Sigmoid colon (tissue), 7 donors: ENCODE measurements at regions of chr2 and their contacts with region 1.

Region 1: DNA sequence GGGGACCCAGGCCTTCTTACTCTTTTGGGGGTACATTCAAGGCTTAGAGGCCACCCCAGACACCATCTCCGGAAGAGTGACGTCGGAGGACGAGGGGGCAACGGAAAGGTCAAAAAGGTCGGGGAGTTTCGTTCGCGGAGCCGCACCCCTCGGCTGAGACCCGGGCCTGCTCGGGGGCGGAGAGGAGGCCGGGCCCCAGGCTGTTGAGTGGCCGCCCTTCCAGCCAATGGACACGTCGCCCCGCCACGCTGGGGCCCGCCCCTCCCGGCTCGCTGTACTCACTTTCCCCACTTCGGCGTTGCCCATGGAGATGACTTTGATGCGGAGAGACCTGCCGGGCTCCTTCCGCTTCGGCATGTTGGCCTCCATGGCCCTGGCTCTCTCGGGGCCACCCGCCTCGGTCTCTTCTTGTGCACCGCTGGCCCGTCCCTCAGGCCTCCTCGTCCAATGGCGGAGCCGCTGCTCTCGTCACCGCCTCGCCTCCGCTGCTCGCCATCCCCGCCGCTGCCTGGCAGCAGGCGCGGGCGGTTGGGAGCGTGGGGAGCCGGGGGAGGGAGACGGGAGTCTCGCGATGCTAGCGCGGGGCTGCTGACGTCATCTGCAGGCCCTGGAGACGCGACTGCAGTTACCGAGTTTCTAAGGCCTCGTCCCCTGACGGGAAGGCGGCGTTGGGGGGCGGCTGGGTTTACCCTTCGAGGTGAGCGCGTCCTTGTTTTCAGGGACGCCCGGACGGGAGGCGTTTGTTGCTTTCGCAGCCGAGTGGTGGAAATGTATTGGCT is at the start of gene DNAJC27:
- DNase-seq: peak; percentile 99
- H3K4me3 ChIP-seq: peak within 1 kb of the TSS; percentile 63 to 88 (median 76)
- H3K27ac ChIP-seq: peak within 1 kb of the TSS; percentile 96 to 99 (median 98)
- H3K4me1 ChIP-seq: peaks cover 0 to 24% (median 12%) of the 10 kb centered on the region in 4 donors
- H3K27me3 ChIP-seq: no peaks in the 10 kb centered on the region
- CTCF ChIP-seq: no peak
- EP300 ChIP-seq: peak in 2 of 4 donors; percentile 57 to 77
- POLR2A ChIP-seq: peak; percentile 91 to 93
- total RNA-seq, gene DNAJC27: 6.3 to 12.5 (median 7.8) TPM

Region 2: DNA sequence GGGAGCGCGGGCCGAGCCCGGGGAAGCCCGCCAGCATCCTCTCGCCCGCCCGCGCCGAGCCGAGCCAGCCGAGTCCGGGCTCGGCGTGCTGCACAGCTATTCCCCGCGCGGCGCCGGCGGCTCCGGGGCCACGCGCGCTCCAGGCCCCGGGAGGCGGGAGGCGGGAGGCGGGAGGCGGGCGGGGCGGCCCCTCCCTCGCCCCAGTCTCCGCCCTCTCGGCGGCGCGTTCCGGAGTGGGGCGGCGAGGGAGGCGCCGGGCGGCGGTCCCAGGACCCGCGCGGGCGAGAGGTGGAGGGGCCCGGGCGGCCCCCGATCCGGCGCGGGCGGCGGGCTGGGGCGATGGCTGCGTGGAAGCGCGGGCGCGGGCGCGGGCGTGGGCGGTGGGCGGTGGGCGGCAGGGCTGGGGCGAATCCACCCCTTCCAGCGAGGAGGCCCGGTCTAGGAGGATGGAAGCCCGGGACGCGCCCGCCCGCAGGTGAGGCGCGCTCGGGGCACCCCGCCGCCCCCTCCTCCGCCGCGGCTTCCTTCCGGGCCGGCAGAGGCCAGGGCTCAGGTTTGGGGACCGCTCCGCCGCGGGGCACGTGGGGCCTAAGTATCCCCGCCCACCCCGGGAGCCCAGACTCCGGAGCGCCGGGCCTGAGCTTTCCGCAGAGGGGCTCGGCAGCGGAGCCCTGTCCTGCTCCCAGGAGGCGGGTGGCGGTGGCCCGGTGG is 51.5 kb before region 1 on chr2 and contains the start of gene ADCY3:
- intact Hi-C with region 1: loop called (anchors 2 kb)
- DNase-seq: peak; percentile 76
- H3K4me3 ChIP-seq: peak within 1 kb of the TSS; percentile 38 to 75 (median 69)
- H3K27ac ChIP-seq: peak within 1 kb of the TSS; percentile 65 to 72 (median 68)
- H3K4me1 ChIP-seq: peaks cover 0 to 27% (median 17%) of the 10 kb centered on the region in 4 donors
- H3K27me3 ChIP-seq: no peaks in the 10 kb centered on the region
- CTCF ChIP-seq: no peak
- EP300 ChIP-seq: no peak
- POLR2A ChIP-seq: no peak
- total RNA-seq, gene ADCY3: 17.5 to 43.8 (median 22.5) TPM

Region 3: DNA sequence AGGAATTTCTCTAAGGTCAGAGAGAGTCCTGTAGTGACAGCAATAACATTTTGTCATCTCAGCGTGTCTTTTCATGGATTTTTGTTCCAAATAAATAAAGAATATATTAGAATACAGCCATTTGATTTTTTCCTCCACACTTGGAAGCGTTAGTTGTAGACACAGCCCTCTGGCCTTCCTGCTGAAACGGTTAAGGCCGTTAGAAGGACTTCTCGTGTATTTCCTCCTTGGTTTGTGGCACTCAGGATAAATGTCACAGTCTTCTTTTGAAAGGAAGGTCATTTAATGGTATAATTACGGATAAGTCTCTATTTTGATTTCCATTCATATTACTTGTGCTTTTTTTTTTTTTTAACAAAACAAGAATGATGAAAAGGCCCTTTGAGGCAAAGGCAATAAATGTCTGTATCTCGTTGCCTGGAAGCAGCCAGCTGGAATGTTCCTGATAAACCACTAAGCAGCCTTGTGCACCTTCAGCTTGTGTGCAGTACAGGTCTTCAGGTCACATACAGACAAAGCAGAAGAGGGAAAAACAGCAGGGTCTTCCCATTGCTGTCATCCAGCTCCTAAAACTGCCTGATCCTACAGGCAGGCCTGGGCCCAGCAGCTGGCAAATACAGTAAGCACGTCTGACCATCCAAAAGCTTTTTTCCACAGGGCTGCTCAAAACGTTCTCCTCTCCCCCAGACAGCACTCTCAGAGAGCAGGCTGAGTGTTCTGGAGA is 84.5 kb after region 1 on chr2:
- intact Hi-C with region 1: no loop called
- DNase-seq: no peak
- H3K4me3 ChIP-seq: no peak overlapping the region
- H3K27ac ChIP-seq: no peak overlapping the region
- H3K4me1 ChIP-seq: peaks cover 0 to 4% (median 0%) of the 10 kb centered on the region in 4 donors
- H3K27me3 ChIP-seq: no peaks in the 10 kb centered on the region
- CTCF ChIP-seq: no peak
- EP300 ChIP-seq: no peak
- POLR2A ChIP-seq: no peak

Region 4: DNA sequence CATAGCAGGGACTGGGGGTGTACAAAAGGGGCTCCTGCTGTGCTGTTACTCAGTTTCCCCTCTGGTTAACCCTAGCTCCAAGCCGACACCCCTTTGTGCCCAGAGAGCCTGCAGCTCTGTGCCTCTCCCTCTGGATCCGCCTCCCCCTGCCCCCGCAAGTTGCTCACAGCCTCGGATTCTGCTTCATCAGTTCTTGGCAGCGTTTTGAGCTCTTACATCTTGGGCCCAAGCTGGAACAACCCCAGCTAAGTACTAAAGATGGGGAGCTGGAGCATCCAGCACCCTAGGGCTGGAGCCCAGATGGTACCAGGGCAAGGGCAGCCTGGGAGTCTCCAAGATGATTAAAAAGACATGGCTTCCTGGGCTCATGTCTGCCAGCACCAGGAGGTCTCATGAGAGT is 155.9 kb after region 1 on chr2:
- intact Hi-C with region 1: loop called (anchors 1 kb)
- DNase-seq: no peak
- H3K4me3 ChIP-seq: no peak overlapping the region
- H3K27ac ChIP-seq: no peak overlapping the region
- H3K4me1 ChIP-seq: peaks cover 0 to 4% (median 1%) of the 10 kb centered on the region in 4 donors
- H3K27me3 ChIP-seq: peaks cover 0 to 16% (median 4%) of the 10 kb centered on the region in 3 donors
- CTCF ChIP-seq: no peak
- EP300 ChIP-seq: no peak
- POLR2A ChIP-seq: no peak

Region 5: DNA sequence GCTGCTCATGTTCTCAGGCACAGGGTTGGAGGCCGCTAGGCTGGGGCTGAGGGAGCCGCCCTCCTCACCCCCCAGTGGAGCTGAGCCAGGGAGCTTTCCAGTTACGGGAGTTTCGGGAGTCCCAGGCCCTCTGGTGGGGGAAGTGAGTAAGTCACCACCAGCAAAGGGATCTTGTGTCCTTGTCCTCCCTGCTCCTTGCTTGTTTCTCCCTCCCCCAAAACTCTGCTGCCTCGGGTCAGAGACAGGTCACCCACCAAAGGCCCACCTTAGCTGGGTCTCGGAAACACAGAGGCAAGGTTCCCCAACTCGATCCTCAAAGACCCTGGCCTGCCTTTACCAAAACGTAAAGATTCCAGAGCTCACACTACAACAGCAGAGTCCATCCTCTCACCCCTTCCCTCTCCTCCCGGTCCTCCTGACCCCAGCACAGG is 257.1 kb after region 1 on chr2:
- intact Hi-C with region 1: no loop called
- DNase-seq: peak; percentile 90
- H3K4me3 ChIP-seq: no peak overlapping the region
- H3K27ac ChIP-seq: peak overlapping the region; percentile 30 to 72 (median 66)
- H3K4me1 ChIP-seq: peaks cover 0 to 22% (median 21%) of the 10 kb centered on the region in 4 donors
- H3K27me3 ChIP-seq: no peaks in the 10 kb centered on the region
- CTCF ChIP-seq: peak; percentile 53 to 80 (median 64)
- EP300 ChIP-seq: no peak
- POLR2A ChIP-seq: no peak